ENCODE measurements at regions of chr3 and their contacts with region 1.

Region 1: GRCh38 chr3:16600780-16601539 is 4.3 kb downstream of the DAZL start:
- DNase-seq: peak; percentile 15 to 80
- H3K4me3 ChIP-seq: no peak overlapping the region
- H3K27ac ChIP-seq: no peak overlapping the region
- H3K4me1 ChIP-seq: peaks cover 0 to 5% (median 0%) of the 10 kb centered on the region in 4 experiments; a peak in 1 of 7 replicates
- H3K27me3 ChIP-seq: no peaks in the 10 kb centered on the region
- CTCF ChIP-seq: peak in 2 of 3 experiments; percentile 66; a peak in 3 of 4 replicates
- EP300 ChIP-seq: no peak
- POLR2A ChIP-seq: no peak
- RAD21 ChIP-seq: peak; percentile 94 to 95

Region 2: GRCh38 chr3:16828815-16829214 is 227.9 kb after region 1 on chr3:
- CTCF ChIA-PET with region 1: interaction called, 12 read pairs
- POLR2A ChIA-PET with region 1: no interaction called
- DNase-seq: peak; percentile 33 to 61
- H3K4me3 ChIP-seq: no peak overlapping the region
- H3K27ac ChIP-seq: no peak overlapping the region
- H3K4me1 ChIP-seq: peaks cover 0 to 2% (median 2%) of the 10 kb centered on the region in 4 experiments; a peak in 2 of 7 replicates
- H3K27me3 ChIP-seq: no peaks in the 10 kb centered on the region
- CTCF ChIP-seq: peak; percentile 24 to 71 (median 65)
- EP300 ChIP-seq: no peak
- POLR2A ChIP-seq: no peak
- RAD21 ChIP-seq: peak; percentile 71 to 79

Region 3: GRCh38 chr3:17227472-17227871 is 626.5 kb after region 1 on chr3:
- CTCF ChIA-PET with region 1: interaction called, 30 read pairs
- POLR2A ChIA-PET with region 1: no interaction called
- DNase-seq: no peak
- H3K4me3 ChIP-seq: no peak overlapping the region
- H3K27ac ChIP-seq: no peak overlapping the region
- H3K4me1 ChIP-seq: no peaks in the 10 kb centered on the region
- H3K27me3 ChIP-seq: peaks cover 0 to 2% (median 0%) of the 10 kb centered on the region in 4 experiments; a peak in 1 of 7 replicates
- CTCF ChIP-seq: no peak
- EP300 ChIP-seq: no peak
- POLR2A ChIP-seq: no peak
- RAD21 ChIP-seq: no peak

Region 4: GRCh38 chr3:17233398-17233800 is 632.4 kb after region 1 on chr3:
- CTCF ChIA-PET with region 1: interaction called, 30 read pairs
- POLR2A ChIA-PET with region 1: no interaction called
- DNase-seq: no peak
- H3K4me3 ChIP-seq: no peak overlapping the region
- H3K27ac ChIP-seq: no peak overlapping the region
- H3K4me1 ChIP-seq: no peaks in the 10 kb centered on the region
- H3K27me3 ChIP-seq: no peaks in the 10 kb centered on the region
- CTCF ChIP-seq: peak in 2 of 3 experiments; percentile 63 to 64; a peak in 3 of 4 replicates
- EP300 ChIP-seq: no peak
- POLR2A ChIP-seq: no peak
- RAD21 ChIP-seq: peak; percentile 95